ENCODE measurements at regions of chr13 and their contacts with region 1.

Region 1: DNA sequence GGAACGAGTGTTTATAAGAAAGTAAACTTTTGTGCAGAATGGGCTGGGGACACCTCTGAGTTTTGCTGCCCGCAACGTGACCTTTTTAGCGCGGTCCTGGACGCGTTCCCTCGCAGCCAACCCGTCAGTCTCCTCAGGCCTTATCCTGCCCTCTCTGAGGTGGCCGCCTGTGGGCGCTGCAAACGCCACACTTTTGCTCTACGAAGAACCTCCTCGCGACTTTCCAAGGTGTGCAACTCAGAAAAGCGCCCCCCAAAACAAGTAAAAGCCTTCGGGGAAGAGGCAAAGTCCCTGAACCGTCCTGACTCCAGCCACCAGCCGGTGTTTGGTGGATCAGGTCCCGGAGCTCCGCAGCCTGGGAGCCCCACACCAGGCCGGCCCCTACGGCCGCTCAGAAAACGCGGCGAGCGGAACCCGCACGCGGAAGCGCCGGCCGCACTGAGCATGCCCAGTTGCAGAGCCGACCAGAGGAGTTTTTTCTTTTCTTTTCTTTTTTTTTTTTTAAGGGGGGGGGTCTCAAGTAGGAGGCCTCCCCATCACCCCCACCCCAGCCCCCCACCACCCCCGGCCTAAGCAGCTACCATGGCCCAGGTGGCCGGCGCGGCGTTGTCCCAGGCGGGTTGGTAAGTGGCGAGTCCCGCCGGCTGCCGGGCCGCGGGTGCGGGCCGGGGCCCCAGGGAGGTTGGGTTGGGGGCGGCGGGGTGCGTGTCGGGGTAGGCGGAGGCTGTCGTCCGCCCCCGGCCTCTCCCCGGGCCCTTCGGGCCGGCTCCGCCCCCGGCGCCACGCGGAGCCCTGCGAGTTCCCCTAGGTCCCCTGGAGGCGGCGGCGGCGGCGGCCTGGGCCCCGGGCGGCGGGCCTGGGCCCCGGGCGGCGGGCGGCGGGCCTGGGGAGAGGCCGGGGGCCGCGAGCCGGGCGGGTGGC is at the start of gene TDRD3:
- DNase-seq: peak; percentile 87
- H3K4me3 Mint-ChIP-seq: peak within 1 kb of the TSS; percentile 92
- H3K27ac Mint-ChIP-seq: peak within 1 kb of the TSS; percentile 97
- H3K4me1 Mint-ChIP-seq: peaks cover 28% of the 10 kb centered on the region
- H3K27me3 Mint-ChIP-seq: no peaks in the 10 kb centered on the region
- total RNA-seq, gene TDRD3: 13.5 to 14.2 TPM

Region 2: DNA sequence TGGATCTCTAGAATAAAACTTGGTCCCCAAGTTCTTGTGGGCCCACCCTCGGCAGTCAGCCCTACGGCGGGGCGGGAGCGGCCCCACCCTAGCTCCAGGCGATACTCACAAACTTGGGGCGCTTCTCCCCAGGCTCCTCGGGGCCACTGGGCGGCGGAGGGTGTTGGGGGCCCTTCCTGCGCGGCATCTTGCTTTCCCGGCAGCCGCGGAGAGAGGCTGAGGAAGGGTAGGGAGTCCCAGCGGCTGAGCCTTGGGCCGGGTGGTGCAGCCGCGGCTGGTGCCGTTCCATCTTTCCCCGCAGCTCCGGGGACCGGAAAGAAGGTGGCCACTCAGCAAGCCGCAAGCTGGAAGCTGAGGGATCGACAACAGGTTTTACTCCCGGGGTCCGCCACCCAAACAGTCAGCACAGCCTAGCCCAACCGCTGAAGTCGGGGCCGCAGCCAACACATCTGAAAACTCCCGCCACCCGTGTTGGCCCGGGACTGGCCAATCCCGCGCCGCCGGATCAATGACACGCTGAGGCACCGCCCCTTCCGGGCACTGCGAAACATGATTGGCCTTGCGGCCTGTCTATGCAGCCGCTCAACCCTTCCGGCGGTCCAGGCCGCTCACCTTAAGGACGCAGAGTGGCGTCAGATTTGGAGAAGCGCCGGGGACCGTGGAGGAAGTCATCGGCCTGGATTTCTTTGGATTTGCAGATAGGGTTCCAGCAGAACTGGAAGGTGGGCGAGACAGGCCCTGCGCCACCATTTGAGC is 233.4 kb before region 1 on chr13 and contains the start of gene DIAPH3:
- CTCF ChIA-PET with region 1: no interaction called
- intact Hi-C with region 1: loop called (anchors 1 kb)
- DNase-seq: peak; percentile 97
- H3K4me3 Mint-ChIP-seq: peak within 1 kb of the TSS; percentile 91
- H3K27ac Mint-ChIP-seq: peak within 1 kb of the TSS; percentile 88
- H3K4me1 Mint-ChIP-seq: peaks cover 36% of the 10 kb centered on the region
- H3K27me3 Mint-ChIP-seq: no peaks in the 10 kb centered on the region
- total RNA-seq, gene DIAPH3: 24.0 to 24.3 TPM

Region 3: GRCh38 chr13:60267498-60268198 is 129.4 kb before region 1 on chr13:
- CTCF ChIA-PET with region 1: no interaction called
- intact Hi-C with region 1: loop called (anchors 2 kb)
- DNase-seq: peak; percentile 58
- H3K4me3 Mint-ChIP-seq: no peak overlapping the region
- H3K27ac Mint-ChIP-seq: no peak overlapping the region
- H3K4me1 Mint-ChIP-seq: no peaks in the 10 kb centered on the region
- H3K27me3 Mint-ChIP-seq: peaks cover 10% of the 10 kb centered on the region

Region 4: GRCh38 chr13:60335531-60335930 is 61.5 kb before region 1 on chr13:
- CTCF ChIA-PET with region 1: no interaction called
- intact Hi-C with region 1: loop called (anchors 2 kb)
- DNase-seq: no peak
- H3K4me3 Mint-ChIP-seq: no peak overlapping the region
- H3K27ac Mint-ChIP-seq: no peak overlapping the region
- H3K4me1 Mint-ChIP-seq: no peaks in the 10 kb centered on the region
- H3K27me3 Mint-ChIP-seq: no peaks in the 10 kb centered on the region

Region 5: GRCh38 chr13:60417734-60418133 is 20.7 kb after region 1 on chr13:
- CTCF ChIA-PET with region 1: no interaction called
- intact Hi-C with region 1: loop called (anchors 1 kb)
- DNase-seq: no peak
- H3K4me3 Mint-ChIP-seq: no peak overlapping the region
- H3K27ac Mint-ChIP-seq: no peak overlapping the region
- H3K4me1 Mint-ChIP-seq: peaks cover 20% of the 10 kb centered on the region
- H3K27me3 Mint-ChIP-seq: no peaks in the 10 kb centered on the region

Region 6: DNA sequence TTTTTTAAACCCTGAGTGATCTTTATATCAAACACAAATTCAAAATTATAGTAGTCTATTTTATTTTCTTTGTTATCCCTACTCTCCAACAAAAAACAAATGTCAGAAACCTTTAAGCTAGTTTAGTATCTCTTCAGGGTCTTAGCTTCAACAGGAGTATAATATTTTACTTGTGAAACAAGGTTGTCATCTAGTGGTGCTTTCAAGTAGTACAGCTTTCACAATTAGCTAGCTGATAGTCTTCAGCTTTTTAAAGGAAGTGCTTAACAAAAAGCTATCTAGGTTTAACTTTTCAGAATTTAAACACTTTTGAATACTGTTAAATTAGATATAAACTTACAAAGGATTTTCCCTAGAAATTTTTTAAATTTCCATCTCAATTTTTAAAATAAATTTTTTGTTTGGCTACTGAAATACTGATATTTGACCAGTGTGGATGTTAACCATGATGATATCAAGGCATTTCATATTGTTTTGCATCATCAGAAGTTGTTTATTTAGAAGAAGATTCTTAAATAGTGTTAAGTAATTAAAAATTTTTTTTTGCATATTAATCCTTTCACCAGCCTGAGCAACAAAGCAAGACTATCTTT is 34.2 kb after region 1 on chr13:
- CTCF ChIA-PET with region 1: interaction called, 5 read pairs
- intact Hi-C with region 1: loop called (anchors 1 kb)
- DNase-seq: no peak
- H3K4me3 Mint-ChIP-seq: no peak overlapping the region
- H3K27ac Mint-ChIP-seq: no peak overlapping the region
- H3K4me1 Mint-ChIP-seq: peaks cover 20% of the 10 kb centered on the region
- H3K27me3 Mint-ChIP-seq: no peaks in the 10 kb centered on the region

Region 7: DNA sequence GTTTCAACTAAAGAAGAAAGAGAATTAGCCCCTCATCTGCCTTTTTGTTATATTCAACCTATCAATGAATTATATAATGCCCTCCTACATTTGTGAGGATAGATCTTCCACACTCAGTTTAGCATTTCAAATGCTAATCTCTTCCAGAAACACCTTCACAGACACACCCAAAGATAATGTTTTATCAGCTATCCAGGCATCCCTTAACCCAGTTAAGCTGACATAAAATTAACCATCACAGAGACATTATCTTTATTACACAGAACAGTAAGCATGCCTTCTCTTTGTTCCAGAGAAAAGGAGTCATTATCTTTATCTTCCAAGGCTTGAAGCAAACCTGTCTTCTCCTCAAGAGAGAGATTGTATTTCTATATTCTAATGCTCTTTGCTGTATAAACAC is 965.5 kb after region 1 on chr13:
- CTCF ChIA-PET with region 1: no interaction called
- intact Hi-C with region 1: no loop called
- DNase-seq: no peak
- H3K4me3 Mint-ChIP-seq: no peak overlapping the region
- H3K27ac Mint-ChIP-seq: no peak overlapping the region
- H3K4me1 Mint-ChIP-seq: no peaks in the 10 kb centered on the region
- H3K27me3 Mint-ChIP-seq: no peaks in the 10 kb centered on the region